PC-9 (cell line): ENCODE measurements at regions of chr13 and their contacts with region 1.

Region 1: GRCh38 chr13:37869756-37870488 is at the start of gene TRPC4:
- DNase-seq: peak; percentile 48 to 71
- H3K4me3 ChIP-seq: peak within 1 kb of the TSS; percentile 63
- H3K27ac ChIP-seq: no peak within 1 kb of the TSS
- H3K4me1 ChIP-seq: peaks cover 12% of the 10 kb centered on the region
- H3K27me3 ChIP-seq: no peaks in the 10 kb centered on the region
- CTCF ChIP-seq: peak; percentile 74
- total RNA-seq, gene TRPC4: 1.4 and 1.7 TPM in 2 replicates

Region 2: GRCh38 chr13:36880961-36881360 is 989.0 kb before region 1 on chr13:
- CTCF ChIA-PET with region 1: no interaction called
- POLR2A ChIA-PET with region 1: no interaction called
- intact Hi-C with region 1: no loop called
- DNase-seq: no peak
- H3K4me3 ChIP-seq: no peak overlapping the region
- H3K27ac ChIP-seq: no peak overlapping the region
- H3K4me1 ChIP-seq: no peaks in the 10 kb centered on the region
- H3K27me3 ChIP-seq: no peaks in the 10 kb centered on the region
- CTCF ChIP-seq: no peak

Region 3: DNA sequence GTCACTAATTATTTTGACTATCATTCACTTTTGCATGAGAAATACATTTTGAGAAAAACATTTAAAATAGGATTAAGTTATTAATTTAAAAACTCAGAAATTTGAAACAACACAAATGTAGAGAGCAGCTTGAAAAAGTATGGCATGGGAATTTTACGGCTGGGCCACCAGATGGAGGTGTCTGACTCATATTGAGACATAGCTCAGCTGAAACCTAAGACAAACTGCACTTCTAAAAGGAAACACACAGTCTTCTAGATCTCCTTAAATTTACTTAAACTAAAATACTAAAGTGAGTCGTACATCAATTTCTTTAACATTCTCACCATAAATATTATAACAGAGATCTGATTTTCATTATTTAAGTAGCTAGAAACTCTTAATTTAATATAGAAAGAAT is 229.4 kb before region 1 on chr13:
- CTCF ChIA-PET with region 1: interaction called, 17 read pairs
- POLR2A ChIA-PET with region 1: no interaction called
- intact Hi-C with region 1: loop called (anchors 1 kb)
- DNase-seq: peak in 1 of 2 experiments; percentile 7
- H3K4me3 ChIP-seq: no peak overlapping the region
- H3K27ac ChIP-seq: no peak overlapping the region
- H3K4me1 ChIP-seq: no peaks in the 10 kb centered on the region
- H3K27me3 ChIP-seq: no peaks in the 10 kb centered on the region
- CTCF ChIP-seq: peak; percentile 69

Region 4: DNA sequence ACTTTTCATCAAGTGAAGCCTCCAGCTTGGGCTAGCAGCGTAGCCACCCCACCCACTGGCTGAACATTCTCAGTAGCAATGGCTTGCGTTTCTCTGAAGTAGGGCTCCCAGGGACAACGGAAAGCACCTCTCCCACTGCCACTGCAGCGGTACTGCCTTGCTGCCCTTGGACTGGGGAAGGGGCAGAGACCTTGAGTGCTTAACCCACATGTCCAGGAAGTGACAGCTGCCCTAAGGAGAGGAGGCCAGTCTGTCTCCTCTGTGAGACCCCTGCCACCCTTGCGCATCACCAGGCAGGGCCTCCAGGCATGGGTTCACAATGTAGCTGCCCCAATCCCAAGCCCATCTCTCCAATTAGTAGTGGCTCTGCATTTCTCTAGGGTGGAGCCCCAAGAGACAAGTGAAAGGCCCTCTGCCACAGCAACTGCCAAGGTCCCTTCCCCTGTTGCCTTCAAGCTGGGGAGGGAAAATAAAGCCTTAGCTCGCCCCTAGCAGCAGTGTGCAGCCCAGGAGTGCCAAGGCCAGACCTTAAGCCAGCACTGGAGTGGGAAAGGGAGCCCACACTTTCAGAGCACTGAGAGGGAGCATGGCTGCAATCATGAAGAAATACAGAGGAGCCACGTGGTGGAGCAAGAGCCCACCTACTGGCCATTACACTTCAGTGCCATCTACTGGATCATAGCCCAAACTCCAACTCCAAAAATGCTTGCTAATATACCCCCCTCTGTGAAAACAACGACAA is 175.6 kb after region 1 on chr13:
- CTCF ChIA-PET with region 1: interaction called, 3 read pairs
- POLR2A ChIA-PET with region 1: no interaction called
- intact Hi-C with region 1: loop called (anchors 10 kb)
- DNase-seq: peak in 1 of 2 experiments; percentile 0
- H3K4me3 ChIP-seq: no peak overlapping the region
- H3K27ac ChIP-seq: no peak overlapping the region
- H3K4me1 ChIP-seq: no peaks in the 10 kb centered on the region
- H3K27me3 ChIP-seq: no peaks in the 10 kb centered on the region
- CTCF ChIP-seq: peak; percentile 61; the same call in 1 of the 2 replicates

Region 5: DNA sequence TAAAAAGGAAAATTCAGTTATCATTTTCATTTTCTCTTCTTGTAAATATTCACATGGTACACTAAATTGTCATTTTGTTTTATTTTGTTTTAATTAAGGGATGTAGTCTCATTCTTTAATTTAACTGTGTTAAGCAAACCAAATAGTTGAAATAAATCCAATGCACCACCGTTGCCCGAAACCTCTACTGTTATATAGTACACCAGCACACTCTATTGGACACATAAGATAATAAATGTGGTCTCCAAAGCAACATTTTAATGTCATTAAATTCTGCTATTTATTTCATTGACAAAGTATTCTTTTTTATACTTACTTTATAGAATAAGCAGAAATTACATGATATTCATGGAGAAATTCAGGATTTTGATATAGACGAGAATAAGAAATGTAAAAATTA is 660.6 kb after region 1 on chr13:
- CTCF ChIA-PET with region 1: no interaction called
- POLR2A ChIA-PET with region 1: no interaction called
- intact Hi-C with region 1: loop called (anchors 5 kb)
- DNase-seq: no peak
- H3K4me3 ChIP-seq: no peak overlapping the region
- H3K27ac ChIP-seq: no peak overlapping the region
- H3K4me1 ChIP-seq: no peaks in the 10 kb centered on the region
- H3K27me3 ChIP-seq: no peaks in the 10 kb centered on the region
- CTCF ChIP-seq: peak; percentile 55

Region 6: DNA sequence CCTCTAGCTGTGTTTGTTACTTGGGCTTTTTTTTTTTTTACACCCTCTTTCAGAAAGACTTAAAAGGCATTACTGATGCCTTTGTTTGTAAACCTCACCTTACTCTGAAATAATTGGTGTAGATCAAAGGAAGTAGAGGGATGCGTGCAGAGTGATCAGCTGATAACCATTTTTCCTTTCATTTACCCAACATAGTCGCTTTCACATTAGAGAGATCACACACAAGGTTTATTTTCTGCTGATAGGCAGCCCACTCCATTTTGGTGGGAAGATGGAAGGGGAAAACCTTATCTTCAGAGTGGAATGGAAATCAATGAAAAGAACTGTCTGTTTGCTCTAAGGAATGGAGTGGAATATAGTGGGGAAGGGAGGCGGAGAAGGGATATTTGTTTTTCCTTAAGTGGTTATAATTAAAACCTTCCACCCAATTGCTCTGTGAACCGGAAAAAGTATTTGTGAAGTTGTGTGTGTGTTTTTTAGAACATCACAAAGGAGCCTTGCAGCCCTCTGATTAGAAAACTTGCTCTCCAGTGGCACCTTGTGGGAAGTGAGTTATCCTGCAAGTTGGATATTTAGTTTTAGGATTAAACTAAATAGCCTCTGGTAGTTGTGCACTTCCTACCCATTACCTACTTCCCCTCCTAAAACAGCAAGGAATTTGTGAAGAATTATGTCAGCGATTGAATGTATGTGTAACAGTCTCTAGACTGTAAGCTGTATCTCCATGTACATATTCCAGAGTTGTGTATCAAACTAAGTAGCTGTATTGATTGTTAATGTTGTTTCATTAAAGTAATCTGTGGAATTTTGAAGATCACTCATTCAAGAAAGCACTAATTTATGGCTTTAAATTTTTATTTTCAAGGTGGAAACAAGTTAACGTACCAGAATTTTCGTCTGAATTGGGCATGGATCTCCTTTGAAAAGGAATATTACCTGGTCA is 893.8 kb after region 1 on chr13:
- CTCF ChIA-PET with region 1: no interaction called
- POLR2A ChIA-PET with region 1: no interaction called
- intact Hi-C with region 1: loop called (anchors 5 kb)
- DNase-seq: peak in 1 of 2 experiments; percentile 38
- H3K4me3 ChIP-seq: no peak overlapping the region
- H3K27ac ChIP-seq: no peak overlapping the region
- H3K4me1 ChIP-seq: 0 out of 2 replicates have a peak, but pooled peaks cover 7% of the 10 kb centered on the region
- H3K27me3 ChIP-seq: no peaks in the 10 kb centered on the region
- CTCF ChIP-seq: peak; percentile 65